ENCODE measurements at regions of chr12 and their contacts with region 1.

Region 1: DNA sequence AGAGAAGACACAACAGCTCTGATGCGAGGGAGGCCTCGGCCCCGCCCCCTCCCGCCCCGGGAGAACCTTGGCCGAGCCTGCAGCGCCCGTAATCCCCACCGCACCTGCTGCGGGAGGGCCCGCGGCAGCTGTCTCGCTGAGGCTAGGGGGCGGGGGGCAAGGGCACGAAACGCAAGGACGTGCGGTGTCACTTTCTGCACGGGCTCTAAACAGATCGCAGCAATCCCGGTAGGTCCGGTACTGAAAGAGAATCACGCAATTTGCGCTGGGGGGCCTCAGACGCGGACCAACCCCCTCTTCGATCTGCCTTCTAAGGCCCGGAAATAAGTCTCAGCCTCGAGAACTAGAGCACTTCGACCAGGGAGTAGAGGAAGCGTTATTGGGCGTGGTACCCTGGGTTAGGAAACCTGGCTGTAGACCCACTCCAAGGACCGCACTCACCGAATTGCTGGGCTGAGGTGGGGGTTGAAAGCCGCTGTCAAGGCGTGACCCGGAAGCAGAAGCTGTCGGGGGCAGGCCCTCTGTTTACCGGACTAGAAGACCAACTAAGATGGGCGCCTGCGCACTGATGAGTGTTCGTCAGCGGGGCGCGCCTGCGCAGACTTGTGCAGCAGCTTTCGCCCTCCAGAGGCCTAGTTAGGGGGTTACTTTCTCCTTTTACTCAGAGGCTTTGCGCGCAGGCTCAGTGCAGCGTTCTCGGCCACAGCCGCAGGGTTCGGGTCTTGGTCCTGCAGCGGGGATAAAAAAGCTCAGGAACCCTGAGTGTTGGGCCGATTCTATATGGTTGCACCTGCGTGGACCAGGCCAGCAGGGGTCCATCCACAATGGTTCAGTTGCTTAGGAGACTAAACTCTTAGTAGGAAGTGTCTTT is at the start of gene ASB8:
- DNase-seq: peak; percentile 99
- ATAC-seq: peak; percentile 98 to 99
- total RNA-seq, gene ASB8: 47.3 to 50.0 TPM

Region 2: GRCh38 chr12:48084066-48084465 is 73.2 kb before region 1 on chr12:
- intact Hi-C with region 1: no loop called
- DNase-seq: no peak
- ATAC-seq: peak; percentile 34 to 39

Region 3: GRCh38 chr12:48105862-48106680 is 51.2 kb before region 1 on chr12 and contains the start of gene SENP1:
- intact Hi-C with region 1: loop called in 1 of 2 experiments (anchors 5 kb)
- DNase-seq: peak; percentile 92
- ATAC-seq: peak; percentile 97 to 98
- total RNA-seq, gene SENP1: 7.2 to 10.7 TPM

Region 4: DNA sequence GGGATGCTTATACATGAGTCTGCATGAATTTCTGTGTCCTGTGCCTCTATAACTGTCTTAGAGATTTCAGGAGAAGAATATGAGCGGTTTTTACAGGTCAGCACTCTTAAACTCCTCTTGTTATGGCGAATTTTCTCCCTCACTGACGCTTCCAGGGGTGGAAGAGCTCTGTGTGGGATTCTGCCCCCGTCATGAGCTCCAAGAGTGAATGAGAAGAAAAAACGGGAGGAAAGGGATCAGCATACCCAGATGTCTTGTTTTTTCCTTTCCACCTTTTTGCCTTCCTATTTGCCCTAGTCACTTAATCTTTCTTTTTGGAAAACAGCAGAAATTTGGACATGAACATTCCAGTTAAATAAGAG is 37.4 kb before region 1 on chr12:
- intact Hi-C with region 1: loop called in 1 of 2 experiments (anchors 5 kb)
- DNase-seq: no peak
- ATAC-seq: peak; percentile 8 to 27

Measured in left cardiac atrium (tissue), 4 donors.